Transverse colon (tissue), 4 donors: ENCODE measurements at regions of chr1 and their contacts with region 1.

Region 1: GRCh38 chr1:202112839-202113672 is 9.7 kb upstream of the GPR37L1 start:
- DNase-seq: peak; percentile 43
- H3K4me3 ChIP-seq: no peak overlapping the region
- H3K27ac ChIP-seq: peak overlapping the region; percentile 35 to 69 (median 59)
- H3K4me1 ChIP-seq: peaks cover 13 to 43% (median 24%) of the 10 kb centered on the region in 4 donors
- H3K27me3 ChIP-seq: no peaks in the 10 kb centered on the region
- CTCF ChIP-seq: no peak
- EP300 ChIP-seq: no peak
- POLR2A ChIP-seq: no peak

Region 2: GRCh38 chr1:202037706-202038296 is 75.3 kb before region 1 on chr1:
- in situ Hi-C with region 1: no loop called
- intact Hi-C with region 1: no loop called
- DNase-seq: no peak
- H3K4me3 ChIP-seq: no peak overlapping the region
- H3K27ac ChIP-seq: no peak overlapping the region
- H3K4me1 ChIP-seq: peaks cover 8 to 23% (median 14%) of the 10 kb centered on the region in 4 donors
- H3K27me3 ChIP-seq: no peaks in the 10 kb centered on the region
- CTCF ChIP-seq: no peak
- EP300 ChIP-seq: no peak
- POLR2A ChIP-seq: no peak

Region 3: DNA sequence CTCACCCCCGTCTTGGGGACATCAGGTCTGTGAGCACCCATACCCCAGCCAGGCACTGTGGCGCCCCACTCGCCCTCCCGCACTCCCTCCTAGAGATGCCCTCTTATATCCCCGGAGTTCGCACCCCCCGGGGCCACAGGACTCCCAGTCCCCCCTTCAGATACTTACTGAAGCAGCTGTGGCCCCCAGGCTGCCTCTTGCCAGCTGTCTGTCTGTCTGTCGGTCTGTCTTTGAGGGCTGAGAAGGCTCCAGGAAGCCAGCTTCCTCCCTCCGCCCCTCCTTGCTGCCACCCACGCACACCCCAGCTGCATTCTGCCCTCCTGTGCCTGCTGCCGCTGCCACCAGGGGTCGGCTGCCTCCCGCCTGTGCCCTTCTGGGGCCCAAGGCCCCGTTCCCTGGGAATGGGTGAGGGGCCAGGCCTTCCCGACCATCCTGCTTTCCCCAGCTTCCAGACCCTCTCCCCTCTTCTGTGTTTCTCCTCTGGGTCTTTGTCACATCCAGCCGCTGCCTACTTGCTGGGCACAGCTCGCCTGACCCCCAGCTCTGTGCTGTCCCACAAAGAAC is 47.4 kb after region 1 on chr1 and contains the start of gene PTPN7:
- in situ Hi-C with region 1: no loop called
- intact Hi-C with region 1: loop called (anchors 2 kb)
- DNase-seq: peak; percentile 61
- H3K4me3 ChIP-seq: peak within 1 kb of the TSS in 3 of 4 donors; percentile 9 to 41 (median 25)
- H3K27ac ChIP-seq: peak within 1 kb of the TSS; percentile 67 to 75 (median 70)
- H3K4me1 ChIP-seq: peaks cover 0 to 11% (median under 1%) of the 10 kb centered on the region in 4 donors
- H3K27me3 ChIP-seq: no peaks in the 10 kb centered on the region
- CTCF ChIP-seq: peak in 1 of 5 experiments; percentile 15
- EP300 ChIP-seq: no peak
- POLR2A ChIP-seq: no peak
- total RNA-seq, gene PTPN7: 5.2 to 32.5 (median 14.0) TPM in 3 of 4 donors, not detected in the other

Region 4: DNA sequence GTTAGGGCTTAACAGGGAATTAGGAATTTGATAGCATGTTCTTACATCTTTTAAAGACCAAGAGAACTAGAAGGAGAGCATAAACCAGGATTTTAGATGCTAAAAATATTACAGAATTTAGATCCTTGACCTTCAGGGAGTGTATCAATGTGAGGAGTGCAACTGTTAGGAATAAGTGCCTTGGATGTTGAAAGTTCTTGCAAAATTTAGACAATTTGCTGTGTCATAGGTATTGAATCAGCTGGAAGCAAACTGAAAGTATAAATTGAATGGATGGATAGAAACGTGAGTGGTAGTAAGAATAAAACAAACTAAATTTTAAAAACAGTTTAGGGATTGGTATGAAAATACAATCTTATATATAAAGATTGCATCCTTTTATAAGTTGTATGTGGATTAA is 263.2 kb after region 1 on chr1:
- in situ Hi-C with region 1: no loop called
- intact Hi-C with region 1: no loop called
- DNase-seq: no peak
- H3K4me3 ChIP-seq: no peak overlapping the region
- H3K27ac ChIP-seq: no peak overlapping the region
- H3K4me1 ChIP-seq: peaks cover 0 to 14% (median 9%) of the 10 kb centered on the region in 4 donors
- H3K27me3 ChIP-seq: no peaks in the 10 kb centered on the region
- CTCF ChIP-seq: no peak
- EP300 ChIP-seq: no peak
- POLR2A ChIP-seq: no peak